Posterior cingulate gyrus (tissue), 11 donors: ENCODE measurements at regions of chr2 and their contacts with region 1.

Region 1: GRCh38 chr2:99489761-99490622 is at the start of gene REV1:
- DNase-seq: peak; percentile 77 to 98 (median 88)

Region 2: GRCh38 chr2:99085421-99085820 is 404.6 kb before region 1 on chr2:
- intact Hi-C with region 1: loop called (anchors 10 kb)
- DNase-seq: no peak

Region 3: GRCh38 chr2:99180755-99181623 is 309.0 kb before region 1 on chr2 and contains the starts of genes MITD1 and MRPL30:
- intact Hi-C with region 1: loop called (anchors 2 kb)
- DNase-seq: peak; percentile 91 to 99 (median 95)

Region 4: DNA sequence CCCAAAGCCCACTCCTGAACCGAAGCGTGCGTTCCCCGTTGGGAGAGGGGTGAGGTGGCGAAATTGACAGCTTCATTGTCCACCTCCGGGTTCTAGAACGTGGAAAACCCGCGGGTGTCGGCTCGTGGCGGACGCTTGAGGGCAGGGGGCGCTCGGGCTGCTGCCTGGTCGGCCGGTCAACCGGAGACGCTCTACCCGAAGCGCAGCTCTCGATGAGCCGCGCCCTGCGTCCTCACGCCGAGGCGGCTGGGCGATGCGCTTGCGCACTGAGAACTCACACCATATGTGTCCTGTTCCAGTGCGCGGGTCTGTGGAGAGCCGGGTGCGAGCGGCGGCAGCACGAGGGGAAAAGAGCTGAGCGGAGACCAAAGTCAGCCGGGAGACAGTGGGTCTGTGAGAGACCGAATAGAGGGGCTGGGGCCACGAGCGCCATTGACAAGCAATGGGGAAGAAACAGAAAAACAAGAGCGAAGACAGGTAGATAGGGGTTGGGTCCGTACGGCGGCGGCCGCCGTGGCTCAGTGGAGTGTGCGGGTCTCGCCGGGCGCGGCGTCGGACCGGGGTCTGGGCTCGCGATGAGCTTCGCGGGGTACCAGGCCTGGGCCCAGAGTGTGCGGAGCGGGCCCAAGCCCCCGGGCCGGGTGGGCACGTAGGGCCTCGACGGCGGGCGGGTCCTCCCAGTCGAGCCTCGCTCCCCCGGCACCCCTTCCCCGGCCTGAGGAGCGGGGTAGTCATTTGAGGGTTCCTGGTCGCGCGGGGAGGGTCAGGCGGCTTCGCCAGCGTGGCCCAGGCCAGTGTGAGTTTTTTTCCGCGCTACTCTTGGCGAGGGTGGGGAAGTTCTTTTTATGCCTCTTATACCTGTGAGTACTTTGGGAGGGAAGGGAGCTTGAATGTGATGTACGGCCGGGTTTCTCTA is 152.6 kb before region 1 on chr2 and contains the start of gene EIF5B:
- intact Hi-C with region 1: loop called (anchors 1 kb)
- DNase-seq: peak; percentile 94 to 100 (median 97)

Region 5: GRCh38 chr2:99442837-99443236 is 47.2 kb before region 1 on chr2:
- intact Hi-C with region 1: loop called (anchors 2 kb)
- DNase-seq: no peak

Region 6: GRCh38 chr2:99682275-99683060 is 192.5 kb after region 1 on chr2:
- intact Hi-C with region 1: no loop called
- DNase-seq: no peak